Activated T-helper 2 cell treated with anti-CD3 and anti-CD28 coated beads, Interferon-gamma antibody, Interleukin-2, Interleukin-4, amounts not matched to agents 10 μg/mL and 5 μg/mL and 100 μg/mL, durations not matched to agents 14 hours and 24 hours and 36 hours (primary cell): ENCODE measurements at regions of chr6 and their contacts with region 1.

Region 1: GRCh38 chr6:105087571-105088211 is 92.1 kb downstream of the POPDC3 start:
- DNase-seq: no peak
- H3K4me3 Mint-ChIP-seq: no peak overlapping the region
- H3K27ac Mint-ChIP-seq: no peak overlapping the region
- H3K4me1 Mint-ChIP-seq: no peaks in the 10 kb centered on the region
- H3K27me3 Mint-ChIP-seq: peaks cover 10% of the 10 kb centered on the region

Region 2: DNA sequence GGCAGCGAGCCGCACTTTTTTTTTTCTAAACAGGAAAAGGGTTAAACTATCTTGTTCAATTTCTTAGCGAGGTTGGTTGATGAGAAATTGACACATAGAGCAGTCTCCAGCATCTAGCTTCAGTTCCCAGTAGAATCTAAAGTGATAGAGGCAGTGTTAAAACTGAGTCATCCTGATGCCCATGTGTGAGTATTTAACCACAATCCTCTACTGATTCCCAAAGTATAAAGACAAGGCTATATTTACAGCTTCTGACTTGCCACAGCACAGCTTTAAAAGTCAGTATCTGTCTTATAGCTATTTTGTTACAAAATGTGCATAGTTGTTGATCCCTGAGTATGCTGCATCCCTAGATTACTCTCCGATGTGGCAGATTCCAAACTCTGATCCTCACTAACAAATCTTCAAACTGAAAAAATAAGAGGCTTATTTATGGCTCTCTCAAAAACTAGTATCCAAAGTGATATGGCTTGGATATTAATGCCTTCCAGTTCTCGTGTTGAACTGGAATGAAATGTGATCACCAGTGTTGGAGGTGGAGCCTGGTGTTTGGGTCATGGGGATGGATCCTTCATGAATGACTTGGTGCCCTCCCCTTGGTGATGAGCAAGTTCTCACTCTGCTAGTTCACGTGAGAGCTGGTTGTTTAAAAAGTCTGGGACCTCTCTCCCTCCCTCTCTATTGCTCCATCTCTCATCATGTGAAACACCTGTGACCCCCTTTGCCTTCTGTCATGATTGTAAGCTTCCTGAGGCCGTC is 105.2 kb after region 1 on chr6:
- intact Hi-C with region 1: no loop called
- DNase-seq: no peak
- H3K4me3 Mint-ChIP-seq: no peak overlapping the region
- H3K27ac Mint-ChIP-seq: no peak overlapping the region
- H3K4me1 Mint-ChIP-seq: no peaks in the 10 kb centered on the region
- H3K27me3 Mint-ChIP-seq: peaks cover 17% of the 10 kb centered on the region

Region 3: DNA sequence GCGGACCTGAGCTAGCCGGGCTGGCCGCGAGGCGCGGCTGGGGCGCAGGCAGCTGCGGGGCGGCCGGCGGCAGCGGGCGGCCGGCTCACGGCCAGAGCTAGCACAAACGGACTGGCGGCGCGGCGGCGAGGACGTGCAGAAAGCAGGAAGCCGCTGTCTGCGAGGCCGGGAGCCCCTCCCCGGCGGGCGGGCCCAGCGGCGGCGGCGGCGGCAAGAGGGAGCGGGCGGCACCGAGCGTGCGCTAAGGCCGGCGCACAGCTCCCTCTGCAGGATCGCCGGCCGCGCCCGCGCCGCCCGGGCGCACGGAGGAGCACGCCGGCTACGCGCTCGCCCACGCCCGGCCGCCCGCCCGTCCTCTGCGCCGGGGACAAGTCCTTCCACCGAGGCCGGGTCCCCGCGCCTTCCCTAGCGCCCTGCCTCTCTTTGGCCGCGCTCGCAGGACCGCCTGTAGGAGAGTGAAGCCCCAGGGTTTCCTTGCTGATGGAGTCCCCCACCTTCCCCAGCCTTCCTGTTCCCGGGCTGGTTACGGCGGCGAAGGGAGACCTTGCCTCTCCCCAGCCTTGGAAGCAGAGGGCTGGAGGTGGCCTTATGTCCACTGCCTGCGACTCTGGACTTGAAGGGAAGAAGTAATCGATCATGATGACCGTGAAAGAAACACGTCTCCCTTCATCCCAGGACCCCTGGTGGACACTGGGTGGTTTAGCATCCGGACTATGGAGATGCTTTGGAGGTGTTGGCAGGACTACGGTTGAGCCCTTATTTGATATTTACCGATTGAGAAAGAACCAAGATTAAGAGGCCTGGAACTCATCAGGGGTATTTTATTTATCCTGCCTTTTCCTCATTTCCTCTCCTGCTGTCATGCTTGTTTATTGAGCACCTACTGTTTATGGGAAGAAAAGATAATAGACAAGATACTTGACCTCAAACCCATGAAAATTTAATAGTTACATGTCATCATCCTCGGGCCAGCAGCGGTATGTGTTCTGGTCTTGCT is 315.5 kb after region 1 on chr6 and contains the start of gene PREP:
- intact Hi-C with region 1: loop called (anchors 1 kb)
- DNase-seq: peak; percentile 82
- H3K4me3 Mint-ChIP-seq: peak within 1 kb of the TSS; percentile 96
- H3K27ac Mint-ChIP-seq: peak within 1 kb of the TSS; percentile 79
- H3K4me1 Mint-ChIP-seq: peaks cover 45% of the 10 kb centered on the region
- H3K27me3 Mint-ChIP-seq: peaks cover 7% of the 10 kb centered on the region
- total RNA-seq, gene PREP: 52.7 and 52.9 TPM in 2 replicates

Region 4: DNA sequence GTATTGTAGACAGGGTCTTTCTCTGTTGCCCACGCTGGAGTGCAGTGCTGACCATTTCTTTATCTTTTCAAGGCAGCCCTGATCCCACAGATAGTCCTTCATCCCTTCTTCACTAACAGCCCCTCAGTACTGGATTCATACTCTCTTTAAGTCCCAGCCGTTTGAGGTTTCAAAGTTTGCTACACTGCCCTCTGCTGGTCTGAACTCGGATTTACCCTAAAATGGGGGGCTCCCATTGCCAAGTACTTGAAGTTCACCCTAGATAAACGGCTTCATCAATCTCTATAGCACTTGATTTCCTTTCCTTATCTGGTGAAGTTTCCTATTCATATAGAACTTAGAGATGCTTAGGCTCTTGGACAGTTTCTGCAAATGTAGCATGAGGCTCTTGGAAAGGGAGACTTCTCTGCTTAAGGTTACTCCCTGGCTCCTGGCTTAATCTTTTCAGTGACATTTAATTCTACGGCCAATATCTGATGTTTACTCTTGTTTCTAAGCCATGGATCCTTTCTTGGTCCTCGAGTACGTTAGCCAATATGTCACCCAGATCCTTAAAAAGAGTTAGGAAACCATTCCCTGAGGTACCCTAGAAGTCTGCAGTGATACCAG is 336.6 kb after region 1 on chr6:
- intact Hi-C with region 1: loop called (anchors 1 kb)
- DNase-seq: peak; percentile 43
- H3K4me3 Mint-ChIP-seq: no peak overlapping the region
- H3K27ac Mint-ChIP-seq: no peak overlapping the region
- H3K4me1 Mint-ChIP-seq: peaks cover 2% of the 10 kb centered on the region
- H3K27me3 Mint-ChIP-seq: peaks cover 11% of the 10 kb centered on the region